ENCODE measurements at regions of chr1 and their contacts with region 1.

Region 1: GRCh38 chr1:154819628-154820590 is 50.2 kb downstream of the KCNN3 start:
- DNase-seq: peak in 1 of 2 experiments; percentile 65
- H3K4me3 ChIP-seq: no peak overlapping the region
- H3K27ac ChIP-seq: no peak overlapping the region
- H3K4me1 ChIP-seq: peaks cover 0 to 2% (median 1%) of the 10 kb centered on the region in 4 experiments; a peak in 3 of 7 replicates
- H3K27me3 ChIP-seq: no peaks in the 10 kb centered on the region
- CTCF ChIP-seq: peak; percentile 67 to 82 (median 76)
- EP300 ChIP-seq: no peak
- POLR2A ChIP-seq: no peak
- RAD21 ChIP-seq: peak; percentile 59 to 72

Region 2: DNA sequence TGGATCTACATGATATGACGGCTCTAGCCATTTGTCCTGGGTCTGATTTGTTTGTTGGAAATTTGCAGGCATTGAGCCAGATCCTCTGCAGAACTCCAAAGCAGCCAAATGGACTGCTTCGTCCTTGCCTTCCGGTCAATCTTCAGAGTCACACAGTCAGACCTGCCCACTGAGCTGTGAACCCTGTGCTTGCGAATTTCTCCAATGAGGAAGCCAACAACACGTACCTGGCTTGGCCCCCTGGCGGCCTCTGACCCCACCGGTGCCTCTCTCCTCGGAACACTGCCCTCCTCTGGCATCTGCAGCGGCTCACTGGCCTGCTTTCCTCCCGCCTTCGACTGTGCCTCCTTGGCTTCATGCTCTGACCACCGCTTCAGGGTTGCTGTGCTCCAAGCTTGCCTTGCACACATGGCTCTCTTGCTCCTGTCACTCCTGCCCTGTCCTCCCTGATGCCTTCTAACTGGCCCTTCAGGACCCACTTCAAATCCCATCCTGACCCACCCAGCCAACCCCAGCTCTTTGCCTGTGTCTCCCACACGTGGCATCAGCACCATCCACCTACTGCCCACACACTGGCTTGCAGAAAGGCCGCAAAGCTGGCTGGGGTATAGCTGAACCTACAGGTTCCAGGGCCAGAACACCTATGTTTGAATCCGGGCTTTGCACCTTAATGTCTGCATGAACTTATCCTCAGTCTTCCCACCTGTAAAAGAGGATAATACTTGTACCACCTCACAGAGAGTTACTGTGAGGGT is 78.0 kb before region 1 on chr1:
- CTCF ChIA-PET with region 1: interaction called, 16 read pairs
- POLR2A ChIA-PET with region 1: no interaction called
- DNase-seq: peak; percentile 56 to 85
- H3K4me3 ChIP-seq: no peak overlapping the region
- H3K27ac ChIP-seq: no peak overlapping the region
- H3K4me1 ChIP-seq: peaks cover 0 to 17% (median 11%) of the 10 kb centered on the region in 4 experiments; a peak in 6 of 7 replicates
- H3K27me3 ChIP-seq: no peaks in the 10 kb centered on the region
- CTCF ChIP-seq: peak; percentile 98 to 99 (median 98)
- EP300 ChIP-seq: no peak
- POLR2A ChIP-seq: no peak
- RAD21 ChIP-seq: peak; percentile 69 to 76

Region 3: GRCh38 chr1:154786804-154787570 is 32.9 kb before region 1 on chr1:
- CTCF ChIA-PET with region 1: interaction called, 10 read pairs
- POLR2A ChIA-PET with region 1: no interaction called
- DNase-seq: no peak
- H3K4me3 ChIP-seq: no peak overlapping the region
- H3K27ac ChIP-seq: no peak overlapping the region
- H3K4me1 ChIP-seq: peaks cover 0 to 7% (median 3%) of the 10 kb centered on the region in 4 experiments; a peak in 3 of 7 replicates
- H3K27me3 ChIP-seq: no peaks in the 10 kb centered on the region; a peak in 1 of 7 replicates
- CTCF ChIP-seq: no peak
- EP300 ChIP-seq: no peak
- POLR2A ChIP-seq: no peak
- RAD21 ChIP-seq: no peak

Region 4: DNA sequence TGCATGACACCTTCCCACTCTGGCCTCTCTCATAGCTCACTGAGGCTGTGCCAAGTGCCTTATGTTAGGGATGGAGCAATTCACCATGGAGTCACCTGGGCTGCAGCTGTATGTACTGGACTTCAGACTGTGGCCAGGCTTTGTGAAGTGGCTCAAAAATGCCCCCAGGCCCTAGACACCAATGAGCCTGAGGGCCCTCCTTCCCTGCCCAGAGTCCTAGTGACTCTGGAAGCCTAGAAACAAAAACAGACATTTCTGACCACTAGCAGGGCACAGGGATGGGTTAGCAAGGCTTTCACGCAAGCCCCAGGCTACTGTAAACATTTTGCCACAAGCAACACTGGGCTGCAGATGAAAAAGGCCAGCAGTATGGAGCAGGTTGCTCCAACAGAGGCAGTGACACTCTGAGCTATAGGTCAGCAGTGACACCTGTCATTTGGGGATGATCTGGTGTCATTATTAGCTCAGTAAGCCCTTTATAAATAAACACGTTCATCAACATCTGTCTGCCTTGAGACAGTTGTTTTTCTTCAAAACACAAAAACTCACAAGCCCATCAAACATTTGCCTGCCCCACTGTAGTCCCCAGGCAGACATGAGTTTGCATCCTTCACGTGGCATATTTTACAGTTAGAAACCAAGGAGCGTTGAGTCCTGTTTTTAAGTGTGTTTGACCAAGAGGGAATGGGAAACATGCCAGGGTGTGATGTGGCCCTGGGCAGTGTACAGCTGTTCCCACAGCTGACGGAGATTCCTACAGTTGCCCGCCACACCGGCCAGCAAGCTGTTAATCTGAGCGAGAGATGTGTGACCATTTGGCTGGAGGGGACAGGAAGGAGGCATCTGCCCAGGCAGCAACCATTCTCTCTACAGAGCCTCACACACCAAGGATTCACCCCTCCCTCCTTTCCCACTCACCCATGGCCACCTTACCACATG is 16.7 kb before region 1 on chr1:
- CTCF ChIA-PET with region 1: interaction called, 29 read pairs
- POLR2A ChIA-PET with region 1: interaction called, 3 read pairs
- DNase-seq: no peak
- H3K4me3 ChIP-seq: no peak overlapping the region
- H3K27ac ChIP-seq: no peak overlapping the region
- H3K4me1 ChIP-seq: peaks cover 0 to 3% (median under 1%) of the 10 kb centered on the region in 4 experiments; a peak in 3 of 7 replicates
- H3K27me3 ChIP-seq: no peaks in the 10 kb centered on the region; a peak in 1 of 7 replicates
- CTCF ChIP-seq: no peak
- EP300 ChIP-seq: no peak
- POLR2A ChIP-seq: no peak
- RAD21 ChIP-seq: no peak

Region 5: GRCh38 chr1:154837672-154838171 is 17.8 kb after region 1 on chr1:
- CTCF ChIA-PET with region 1: interaction called, 31 read pairs
- POLR2A ChIA-PET with region 1: no interaction called
- DNase-seq: no peak
- H3K4me3 ChIP-seq: no peak overlapping the region
- H3K27ac ChIP-seq: no peak overlapping the region
- H3K4me1 ChIP-seq: peaks cover 0 to 11% (median 4%) of the 10 kb centered on the region in 4 experiments; a peak in 4 of 7 replicates
- H3K27me3 ChIP-seq: no peaks in the 10 kb centered on the region
- CTCF ChIP-seq: no peak
- EP300 ChIP-seq: no peak
- POLR2A ChIP-seq: no peak
- RAD21 ChIP-seq: no peak

Region 6: DNA sequence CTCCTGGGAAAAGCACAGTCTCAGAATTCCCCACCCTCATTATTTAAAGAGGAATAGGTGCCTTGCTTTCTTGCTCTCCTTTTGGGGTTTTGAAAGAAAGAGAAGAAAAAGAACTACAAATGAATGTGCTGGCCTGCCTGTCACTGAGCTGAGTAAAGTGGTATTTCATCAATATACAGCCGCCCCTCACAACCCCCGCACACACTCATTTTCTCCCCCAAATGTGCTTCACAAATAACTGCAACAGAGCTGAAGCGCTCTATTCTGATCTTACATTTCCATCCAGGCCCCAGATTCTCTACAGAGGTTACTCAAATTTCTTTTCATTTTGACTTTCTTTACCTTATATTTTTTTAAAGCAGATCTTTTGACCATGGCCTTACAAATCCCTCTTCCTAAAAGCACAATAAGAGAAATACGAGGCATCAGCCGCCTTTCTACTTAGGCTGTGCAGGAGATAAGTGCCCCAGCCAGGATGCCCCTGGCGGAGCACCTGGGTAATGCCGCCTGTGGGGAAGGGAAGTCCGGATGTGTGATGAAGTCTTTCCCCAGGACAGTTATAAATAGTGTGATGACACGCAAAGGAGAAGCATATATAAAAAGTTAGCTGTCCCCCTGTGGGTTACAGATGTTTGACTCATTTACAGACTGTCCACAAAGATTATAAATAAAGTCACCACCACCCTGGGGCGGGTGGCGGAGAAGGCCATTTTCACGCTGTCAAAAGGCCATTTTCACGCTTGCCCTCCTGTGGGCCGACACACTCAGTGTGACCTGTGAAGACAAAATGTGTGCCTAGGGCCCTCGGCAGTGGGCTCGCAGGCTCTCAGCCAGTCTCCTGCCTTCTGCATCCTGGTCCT is 43.6 kb after region 1 on chr1:
- CTCF ChIA-PET with region 1: interaction called, 16 read pairs
- POLR2A ChIA-PET with region 1: interaction called, 4 read pairs
- DNase-seq: peak in 1 of 2 experiments; percentile 76
- H3K4me3 ChIP-seq: no peak overlapping the region
- H3K27ac ChIP-seq: no peak overlapping the region
- H3K4me1 ChIP-seq: peaks cover 10 to 36% (median 15%) of the 10 kb centered on the region in 4 experiments; a peak in 6 of 7 replicates
- H3K27me3 ChIP-seq: peaks cover 0 to 6% (median 5%) of the 10 kb centered on the region in 4 experiments; a peak in 3 of 7 replicates
- CTCF ChIP-seq: peak; percentile 67 to 86 (median 80)
- EP300 ChIP-seq: no peak
- POLR2A ChIP-seq: no peak
- RAD21 ChIP-seq: peak; percentile 46 to 62